ENCODE measurements at regions of chr1 and their contacts with region 1.

Region 1: GRCh38 chr1:67005068-67005467 is 48.9 kb downstream of the SLC35D1 start:
- DNase-seq: no peak
- ATAC-seq: no peak
- H3K4me3 ChIP-seq: no peak overlapping the region
- H3K27ac ChIP-seq: no peak overlapping the region
- H3K4me1 ChIP-seq: no peaks in the 10 kb centered on the region
- H3K27me3 ChIP-seq: no peaks in the 10 kb centered on the region
- CTCF ChIP-seq: no peak
- POLR2A ChIP-seq: no peak
- RAD21 ChIP-seq: no peak

Region 2: GRCh38 chr1:66981679-66982078 is 23.4 kb before region 1 on chr1:
- CTCF ChIA-PET with region 1: no interaction called
- POLR2A ChIA-PET with region 1: no interaction called
- RAD21 ChIA-PET with region 1: no interaction called
- intact Hi-C with region 1: no loop called
- DNase-seq: no peak
- ATAC-seq: no peak
- H3K4me3 ChIP-seq: no peak overlapping the region
- H3K27ac ChIP-seq: no peak overlapping the region
- H3K4me1 ChIP-seq: no peaks in the 10 kb centered on the region
- H3K27me3 ChIP-seq: no peaks in the 10 kb centered on the region
- CTCF ChIP-seq: no peak
- POLR2A ChIP-seq: no peak
- RAD21 ChIP-seq: no peak

Region 3: DNA sequence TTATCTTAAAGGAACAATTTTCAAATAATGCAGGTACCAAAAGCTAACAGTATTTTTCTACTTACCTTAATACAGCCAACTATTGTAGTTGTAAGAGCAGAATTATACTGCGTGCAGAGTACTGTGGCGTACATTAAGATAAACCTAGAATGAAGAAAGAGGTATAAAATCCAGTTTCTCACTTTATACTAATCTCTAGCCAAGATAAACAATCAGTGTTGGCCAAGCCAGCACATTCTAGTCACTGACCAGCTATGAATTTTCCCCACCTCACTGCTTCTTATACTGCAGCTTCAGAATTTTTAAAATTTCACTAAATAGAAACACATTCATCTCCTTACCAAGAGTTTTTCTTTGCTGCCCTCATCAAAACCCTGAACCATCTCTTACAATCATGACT is 15.2 kb after region 1 on chr1:
- CTCF ChIA-PET with region 1: no interaction called
- POLR2A ChIA-PET with region 1: no interaction called
- RAD21 ChIA-PET with region 1: no interaction called
- intact Hi-C with region 1: loop called (anchors 1 kb)
- DNase-seq: no peak
- ATAC-seq: no peak
- H3K4me3 ChIP-seq: no peak overlapping the region
- H3K27ac ChIP-seq: no peak overlapping the region
- H3K4me1 ChIP-seq: no peaks in the 10 kb centered on the region
- H3K27me3 ChIP-seq: no peaks in the 10 kb centered on the region
- CTCF ChIP-seq: no peak
- POLR2A ChIP-seq: no peak
- RAD21 ChIP-seq: no peak

Region 4: GRCh38 chr1:67256291-67257172 is 251.5 kb after region 1 on chr1:
- CTCF ChIA-PET with region 1: no interaction called
- POLR2A ChIA-PET with region 1: no interaction called
- RAD21 ChIA-PET with region 1: no interaction called
- intact Hi-C with region 1: no loop called
- DNase-seq: no peak
- ATAC-seq: no peak
- H3K4me3 ChIP-seq: no peak overlapping the region
- H3K27ac ChIP-seq: no peak overlapping the region
- H3K4me1 ChIP-seq: no peaks in the 10 kb centered on the region
- H3K27me3 ChIP-seq: no peaks in the 10 kb centered on the region
- CTCF ChIP-seq: no peak
- POLR2A ChIP-seq: no peak
- RAD21 ChIP-seq: no peak

Measured in HCT116 (cell line).